Activated CD4-positive, alpha-beta T cell treated with anti-CD3 and anti-CD28 coated beads, Interleukin-2, amount 10 ng/mL, durations not matched to agents 24 days and 14 days (primary cell): ENCODE measurements at regions of chr18 and their contacts with region 1.

Region 1: GRCh38 chr18:23487738-23488570 is 15.4 kb upstream of the RMC1 start:
- DNase-seq: peak; percentile 85
- H3K4me3 Mint-ChIP-seq: peak overlapping the region; percentile 57
- H3K27ac Mint-ChIP-seq: peak overlapping the region; percentile 81
- H3K4me1 Mint-ChIP-seq: peaks cover 17% of the 10 kb centered on the region
- H3K27me3 Mint-ChIP-seq: no peaks in the 10 kb centered on the region

Region 2: GRCh38 chr18:22999212-22999611 is 488.7 kb before region 1 on chr18:
- intact Hi-C with region 1: no loop called
- DNase-seq: no peak
- H3K4me3 Mint-ChIP-seq: no peak overlapping the region
- H3K27ac Mint-ChIP-seq: no peak overlapping the region
- H3K4me1 Mint-ChIP-seq: peaks cover 5% of the 10 kb centered on the region
- H3K27me3 Mint-ChIP-seq: no peaks in the 10 kb centered on the region

Region 3: GRCh38 chr18:23515911-23516546 is 28.1 kb after region 1 on chr18:
- intact Hi-C with region 1: loop called (anchors 1 kb)
- DNase-seq: peak; percentile 93
- H3K4me3 Mint-ChIP-seq: no peak overlapping the region
- H3K27ac Mint-ChIP-seq: peak overlapping the region; percentile 57
- H3K4me1 Mint-ChIP-seq: peaks cover 26% of the 10 kb centered on the region
- H3K27me3 Mint-ChIP-seq: no peaks in the 10 kb centered on the region